Endothelial cell of umbilical vein (primary cell): ENCODE measurements at regions of chr3 and their contacts with region 1.

Region 1: DNA sequence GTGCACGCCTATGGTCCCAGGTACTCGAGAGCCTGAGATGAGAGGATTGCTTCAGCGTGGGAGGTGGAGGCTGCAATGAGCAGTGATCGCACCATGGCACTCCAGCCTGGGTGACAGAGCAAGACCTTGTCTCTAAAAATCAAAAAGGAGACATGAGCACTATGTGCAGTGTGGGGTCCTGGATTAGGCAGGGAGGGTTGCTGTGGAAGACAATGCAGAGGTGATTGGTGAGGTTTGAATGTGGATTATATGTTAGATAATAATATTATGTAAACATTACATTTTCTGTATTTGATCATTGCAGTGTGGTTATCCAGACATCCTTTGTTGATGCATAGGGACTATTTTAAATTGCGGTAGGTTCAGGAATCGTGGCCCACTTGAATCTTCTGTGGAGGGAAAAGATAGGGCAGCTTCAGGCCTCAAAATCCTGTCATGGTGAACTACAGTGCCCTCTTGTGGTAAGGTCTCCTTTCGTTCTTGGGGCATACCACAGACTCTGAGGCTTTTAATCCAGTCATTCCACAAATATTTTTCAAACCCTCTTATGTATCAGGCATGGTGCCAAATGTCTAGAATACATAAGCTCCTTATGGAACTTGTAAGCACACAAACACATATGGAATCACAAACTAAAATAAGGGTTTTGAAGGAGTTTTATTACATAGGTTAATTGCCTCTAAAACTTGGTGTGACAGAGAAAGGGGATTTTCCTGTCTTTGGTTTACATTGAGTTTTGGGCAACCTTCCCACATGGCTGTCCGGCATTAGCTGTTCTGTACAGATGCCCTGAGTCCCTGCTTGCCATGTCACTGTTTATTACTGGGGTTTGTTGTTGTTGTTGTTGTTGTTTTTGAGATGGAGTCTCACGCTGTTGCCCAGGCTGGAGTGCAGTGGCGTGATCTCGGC is 37.7 kb downstream of the GPD1L start:
- DNase-seq: peak; percentile 90
- H3K4me3 ChIP-seq: no peak overlapping the region
- H3K27ac ChIP-seq: no peak overlapping the region
- H3K4me1 ChIP-seq: peaks cover 23% of the 10 kb centered on the region
- H3K27me3 ChIP-seq: no peaks in the 10 kb centered on the region
- CTCF ChIP-seq: peak; percentile 71 to 76
- POLR2A ChIP-seq: no peak

Region 2: GRCh38 chr3:31412832-31413231 is 731.3 kb before region 1 on chr3:
- CTCF ChIA-PET with region 1: no interaction called
- POLR2A ChIA-PET with region 1: no interaction called
- dilution Hi-C with region 1: no loop called
- intact Hi-C with region 1: no loop called
- DNase-seq: no peak
- H3K4me3 ChIP-seq: no peak overlapping the region
- H3K27ac ChIP-seq: no peak overlapping the region
- H3K4me1 ChIP-seq: no peaks in the 10 kb centered on the region
- H3K27me3 ChIP-seq: peaks cover 0 to 1% of the 10 kb centered on the region in 2 experiments
- CTCF ChIP-seq: no peak
- POLR2A ChIP-seq: no peak

Region 3: DNA sequence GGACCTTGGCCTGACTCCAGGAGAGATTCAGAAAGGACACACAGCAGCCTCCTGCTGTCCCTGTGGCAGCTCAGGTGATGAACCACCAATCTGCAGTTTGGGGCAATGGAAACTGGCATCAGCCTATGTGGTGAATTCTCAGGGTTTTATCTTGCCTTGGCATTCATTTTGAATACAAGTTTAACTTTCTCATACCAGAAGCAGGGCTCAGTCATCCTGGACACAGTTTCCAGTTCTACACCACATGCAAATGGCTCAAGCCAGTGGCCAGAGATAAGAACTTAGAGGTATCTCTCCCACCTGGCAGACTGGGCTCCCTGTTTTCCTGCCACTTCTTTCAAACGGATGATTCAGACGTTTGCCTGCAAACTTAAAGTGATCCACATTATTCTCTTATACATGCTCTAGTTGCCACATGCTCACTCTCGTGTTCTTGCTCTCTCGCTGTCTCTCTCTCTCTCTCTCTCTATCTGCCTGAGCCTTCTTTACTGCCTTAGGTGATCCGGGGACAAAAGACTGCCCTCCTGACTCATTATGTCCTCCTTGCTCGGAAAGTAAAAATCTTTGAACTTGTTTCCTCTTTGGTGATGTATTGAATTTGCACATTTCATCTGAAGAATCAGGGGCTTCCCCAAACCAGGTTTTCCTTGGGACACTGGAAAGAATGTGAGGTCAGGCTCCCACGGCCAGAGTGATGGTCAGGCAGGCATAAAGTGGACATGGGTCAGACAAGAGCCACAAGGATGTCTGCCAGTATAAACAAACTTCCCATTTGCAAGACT is 711.0 kb before region 1 on chr3:
- CTCF ChIA-PET with region 1: no interaction called
- POLR2A ChIA-PET with region 1: no interaction called
- dilution Hi-C with region 1: no loop called
- intact Hi-C with region 1: no loop called
- DNase-seq: peak; percentile 56
- H3K4me3 ChIP-seq: no peak overlapping the region
- H3K27ac ChIP-seq: no peak overlapping the region
- H3K4me1 ChIP-seq: no peaks in the 10 kb centered on the region
- H3K27me3 ChIP-seq: peaks cover 0 to 6% of the 10 kb centered on the region in 2 experiments
- CTCF ChIP-seq: no peak
- POLR2A ChIP-seq: no peak

Region 4: GRCh38 chr3:31610700-31611275 is 533.3 kb before region 1 on chr3:
- CTCF ChIA-PET with region 1: interaction called, 17 read pairs
- POLR2A ChIA-PET with region 1: no interaction called
- dilution Hi-C with region 1: no loop called
- intact Hi-C with region 1: loop called (anchors 1 kb)
- DNase-seq: peak; percentile 70
- H3K4me3 ChIP-seq: no peak overlapping the region
- H3K27ac ChIP-seq: no peak overlapping the region
- H3K4me1 ChIP-seq: no peaks in the 10 kb centered on the region
- H3K27me3 ChIP-seq: no peaks in the 10 kb centered on the region
- CTCF ChIP-seq: peak; percentile 31 to 40
- POLR2A ChIP-seq: no peak

Region 5: GRCh38 chr3:31768479-31769123 is 375.5 kb before region 1 on chr3:
- CTCF ChIA-PET with region 1: interaction called, 8 read pairs
- POLR2A ChIA-PET with region 1: no interaction called
- dilution Hi-C with region 1: no loop called
- intact Hi-C with region 1: loop called (anchors 1 kb)
- DNase-seq: peak; percentile 76
- H3K4me3 ChIP-seq: no peak overlapping the region
- H3K27ac ChIP-seq: no peak overlapping the region
- H3K4me1 ChIP-seq: no peaks in the 10 kb centered on the region
- H3K27me3 ChIP-seq: no peaks in the 10 kb centered on the region
- CTCF ChIP-seq: peak; percentile 43 to 58
- POLR2A ChIP-seq: no peak

Region 6: DNA sequence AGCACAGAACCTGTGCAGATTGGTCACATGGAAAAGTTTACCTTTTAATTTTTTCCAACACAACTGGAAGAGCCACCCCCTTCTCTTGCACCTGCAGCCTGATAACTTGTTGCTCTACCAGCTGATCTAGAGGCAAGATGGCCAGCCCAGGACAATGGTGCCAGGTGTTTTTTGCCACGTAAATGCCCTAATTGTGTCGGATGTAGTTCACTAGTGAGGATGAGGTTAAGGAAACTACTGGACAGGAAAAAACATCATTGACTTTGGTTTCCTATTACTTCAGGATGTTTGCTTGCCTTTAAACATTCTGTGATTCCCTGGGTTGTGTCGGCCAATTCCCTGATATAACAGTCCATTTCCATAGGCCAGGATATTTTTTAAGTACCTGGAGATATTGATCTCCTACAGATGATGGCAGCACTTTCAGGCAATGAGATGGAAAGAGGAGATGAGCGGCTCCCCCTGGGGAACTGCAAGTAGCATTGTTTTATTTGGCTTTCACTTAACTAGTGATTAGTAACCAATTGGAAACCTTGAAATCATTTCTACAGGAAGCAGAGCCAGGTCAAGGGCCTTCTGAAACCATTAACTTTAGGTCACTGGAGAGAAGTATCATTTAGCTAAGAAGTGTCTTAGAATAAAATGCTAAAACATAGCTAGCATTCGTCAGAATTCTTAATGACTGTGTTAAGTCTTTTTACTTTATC is 235.6 kb before region 1 on chr3:
- CTCF ChIA-PET with region 1: interaction called, 3 read pairs
- POLR2A ChIA-PET with region 1: no interaction called
- dilution Hi-C with region 1: no loop called
- intact Hi-C with region 1: loop called (anchors 5 kb)
- DNase-seq: peak; percentile 74
- H3K4me3 ChIP-seq: no peak overlapping the region
- H3K27ac ChIP-seq: no peak overlapping the region
- H3K4me1 ChIP-seq: peaks cover 28% of the 10 kb centered on the region
- H3K27me3 ChIP-seq: no peaks in the 10 kb centered on the region
- CTCF ChIP-seq: peak in 1 of 2 donors; percentile 4
- POLR2A ChIP-seq: no peak

Region 7: DNA sequence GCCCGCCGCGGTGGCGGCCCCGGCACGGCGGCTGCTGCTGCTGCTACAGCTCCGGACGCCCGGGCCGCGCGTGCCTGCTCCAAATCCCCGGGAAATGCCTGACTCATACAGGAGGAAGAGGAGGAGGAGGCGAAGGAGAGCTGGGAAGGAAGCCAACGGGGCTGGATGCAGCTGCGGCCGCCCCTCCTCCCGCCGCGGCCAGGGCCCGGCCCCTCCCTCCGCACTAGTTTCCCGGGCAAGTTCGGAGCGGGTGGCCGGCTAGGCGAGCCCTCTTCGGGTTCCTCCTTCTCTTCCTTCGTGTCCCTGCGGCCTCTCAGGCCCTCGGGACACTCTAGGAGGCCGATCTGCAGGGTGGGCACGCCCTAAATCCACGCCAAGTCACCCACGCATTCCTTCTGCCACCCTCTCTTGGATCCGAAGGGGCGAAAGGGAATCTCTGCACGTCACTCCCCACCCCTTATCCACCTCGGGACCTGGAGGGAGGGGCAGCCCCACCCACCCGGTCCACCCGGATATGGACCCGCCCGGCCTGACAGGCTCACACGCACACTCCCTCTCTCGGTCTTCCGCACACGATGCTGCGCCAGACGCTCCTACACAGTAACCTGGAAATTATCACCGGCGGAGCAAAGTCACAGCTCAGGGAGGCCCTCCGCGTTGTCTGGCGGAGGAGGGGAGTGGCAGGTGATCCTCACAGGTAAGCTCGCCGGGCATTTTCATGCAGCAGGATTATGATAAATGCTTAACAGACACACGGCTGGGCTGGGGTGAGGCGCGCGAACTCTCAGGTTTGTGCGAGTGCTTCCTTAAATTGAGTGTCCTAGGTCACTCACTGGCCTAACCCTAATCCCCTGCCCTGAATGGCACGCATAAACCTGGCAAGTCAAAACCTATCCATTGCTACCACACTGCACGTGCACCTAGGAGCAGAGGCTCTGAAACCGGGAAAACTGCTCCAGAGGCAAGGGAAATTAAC is 162.6 kb before region 1 on chr3 and contains the starts of genes OSBPL10 and ZNF860:
- CTCF ChIA-PET with region 1: interaction called, 10 read pairs
- POLR2A ChIA-PET with region 1: no interaction called
- dilution Hi-C with region 1: no loop called
- intact Hi-C with region 1: loop called (anchors 1 kb)
- DNase-seq: peak; percentile 95
- H3K4me3 ChIP-seq: peak within 1 kb of the TSS; percentile 50 to 94 (median 57)
- H3K27ac ChIP-seq: peak within 1 kb of the TSS; percentile 71
- H3K4me1 ChIP-seq: peaks cover 17% of the 10 kb centered on the region
- H3K27me3 ChIP-seq: no peaks in the 10 kb centered on the region
- CTCF ChIP-seq: no peak
- POLR2A ChIP-seq: peak; percentile 12
- total RNA-seq, gene OSBPL10: 37.1 and 47.6 TPM in 2 replicates
- total RNA-seq, gene ZNF860: 0.73 and 1.0 TPM in 2 replicates

Region 8: GRCh38 chr3:32026593-32026992 is 117.5 kb before region 1 on chr3:
- CTCF ChIA-PET with region 1: interaction called, 14 read pairs
- POLR2A ChIA-PET with region 1: interaction called, 5 read pairs
- dilution Hi-C with region 1: no loop called
- intact Hi-C with region 1: no loop called
- DNase-seq: no peak
- H3K4me3 ChIP-seq: no peak overlapping the region
- H3K27ac ChIP-seq: no peak overlapping the region
- H3K4me1 ChIP-seq: no peaks in the 10 kb centered on the region
- H3K27me3 ChIP-seq: no peaks in the 10 kb centered on the region
- CTCF ChIP-seq: no peak
- POLR2A ChIP-seq: no peak

Region 9: GRCh38 chr3:32175607-32176197 is 31.6 kb after region 1 on chr3:
- CTCF ChIA-PET with region 1: no interaction called
- POLR2A ChIA-PET with region 1: no interaction called
- dilution Hi-C with region 1: no loop called
- intact Hi-C with region 1: no loop called
- DNase-seq: peak; percentile 67
- H3K4me3 ChIP-seq: no peak overlapping the region
- H3K27ac ChIP-seq: no peak overlapping the region
- H3K4me1 ChIP-seq: peaks cover 6% of the 10 kb centered on the region
- H3K27me3 ChIP-seq: no peaks in the 10 kb centered on the region
- CTCF ChIP-seq: peak; percentile 63 to 69
- POLR2A ChIP-seq: no peak